Heart left ventricle (tissue), 16 donors: ENCODE measurements at regions of chr12 and their contacts with region 1.

Region 1: GRCh38 chr12:15789220-15790171 is at the start of gene EPS8:
- DNase-seq: peak; percentile 90 to 96 (median 93)
- ATAC-seq: peak; percentile 83 to 98 (median 94)
- H3K4me3 ChIP-seq: peak within 1 kb of the TSS; percentile 66 to 92 (median 84)
- H3K27ac ChIP-seq: peak within 1 kb of the TSS; percentile 80 to 94 (median 89)
- H3K4me1 ChIP-seq: peaks cover 0 to 13% (median 0%) of the 10 kb centered on the region in 12 donors
- H3K27me3 ChIP-seq: no peaks in the 10 kb centered on the region
- CTCF ChIP-seq: peak in 3 of 12 donors; percentile 4 to 33 (median 26)
- POLR2A ChIP-seq: peak in 1 of 2 donors; percentile 90
- total RNA-seq, gene EPS8: 11.7 to 56.0 (median 20.9) TPM

Region 2: DNA sequence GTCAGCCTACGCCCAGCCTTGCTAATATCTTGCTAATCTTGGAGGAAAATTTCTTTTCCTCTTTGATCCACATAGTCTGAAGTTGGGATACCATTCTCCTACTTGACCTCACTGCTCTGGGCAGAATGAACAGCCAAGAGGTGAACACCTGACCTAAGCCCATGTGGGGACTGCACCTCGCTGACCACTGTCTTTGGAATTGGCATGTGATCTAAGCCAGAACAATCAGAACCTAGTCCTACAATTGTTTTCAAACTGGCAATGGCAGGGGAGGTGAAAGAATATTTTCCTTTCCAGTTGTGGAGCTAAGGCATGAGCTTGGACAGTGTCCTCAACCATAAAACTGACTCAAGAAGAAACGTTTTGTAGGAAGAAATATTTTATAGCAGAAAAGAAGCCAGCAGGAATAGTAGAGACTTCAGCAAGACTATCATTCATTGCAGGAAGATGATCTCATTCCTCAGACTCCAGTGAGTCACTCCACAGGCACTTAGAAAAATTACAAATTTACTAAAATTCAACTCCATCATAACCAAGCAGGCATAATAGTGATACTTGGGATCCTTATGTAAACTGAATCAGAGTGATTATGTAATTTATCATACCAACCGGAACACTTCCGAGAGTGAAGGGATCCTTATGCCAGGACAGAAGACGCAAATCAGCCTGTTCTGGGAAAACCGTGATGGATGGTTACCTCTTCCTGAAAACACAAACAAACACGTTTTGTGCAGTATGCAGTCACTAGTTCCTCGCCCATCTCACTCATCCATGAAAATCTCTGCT is 452.5 kb before region 1 on chr12:
- intact Hi-C with region 1: no loop called
- DNase-seq: no peak
- ATAC-seq: no peak
- H3K4me3 ChIP-seq: no peak overlapping the region
- H3K27ac ChIP-seq: no peak overlapping the region
- H3K4me1 ChIP-seq: no peaks in the 10 kb centered on the region
- H3K27me3 ChIP-seq: peaks cover 0 to 12% (median 0%) of the 10 kb centered on the region in 9 donors
- CTCF ChIP-seq: no peak
- POLR2A ChIP-seq: no peak

Region 3: GRCh38 chr12:15590180-15590826 is 199.2 kb before region 1 on chr12:
- intact Hi-C with region 1: loop called in 7 of 10 experiments (anchors 2 to 10 kb)
- DNase-seq: peak; percentile 28 to 54 (median 36)
- ATAC-seq: peak; percentile 61 to 90 (median 89)
- H3K4me3 ChIP-seq: peak overlapping the region in 9 of 12 donors; percentile 22 to 47 (median 36)
- H3K27ac ChIP-seq: peak overlapping the region in 6 of 12 donors; percentile 5 to 60 (median 38)
- H3K4me1 ChIP-seq: peaks cover 0 to 8% (median 0%) of the 10 kb centered on the region in 12 donors
- H3K27me3 ChIP-seq: no peaks in the 10 kb centered on the region
- CTCF ChIP-seq: peak; percentile 83 to 98 (median 90)
- POLR2A ChIP-seq: no peak

Region 4: DNA sequence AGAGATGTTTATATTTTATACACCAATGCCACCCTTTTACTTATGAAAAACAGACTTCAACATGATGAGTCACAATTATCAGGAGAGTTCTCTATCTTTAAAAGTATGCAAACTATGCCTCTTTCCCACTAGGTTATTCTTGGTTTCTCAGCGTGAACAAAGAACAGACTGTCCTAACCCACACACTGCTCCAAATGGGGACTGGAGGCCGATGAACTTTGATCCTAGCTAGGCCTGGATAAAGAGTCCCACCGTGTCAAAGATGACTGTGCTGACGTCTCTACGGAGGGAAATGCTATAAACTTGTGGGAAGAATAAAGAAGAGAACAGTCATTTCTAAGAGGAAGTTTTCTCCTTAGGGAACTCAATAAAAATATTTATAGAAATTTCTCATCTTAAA is 160.4 kb before region 1 on chr12:
- intact Hi-C with region 1: loop called in 2 of 10 experiments (anchors 5 to 10 kb)
- DNase-seq: peak in 4 of 5 donors; percentile 72 to 81 (median 76)
- ATAC-seq: peak; percentile 91 to 98 (median 98)
- H3K4me3 ChIP-seq: no peak overlapping the region
- H3K27ac ChIP-seq: peak overlapping the region; percentile 75 to 90 (median 82)
- H3K4me1 ChIP-seq: peaks cover 0 to 57% (median 28%) of the 10 kb centered on the region in 12 donors
- H3K27me3 ChIP-seq: no peaks in the 10 kb centered on the region
- CTCF ChIP-seq: no peak
- POLR2A ChIP-seq: no peak

Region 5: GRCh38 chr12:15688202-15688736 is 101.2 kb before region 1 on chr12:
- intact Hi-C with region 1: loop called in 1 of 10 experiments (anchors 10 kb)
- DNase-seq: peak; percentile 52 to 77 (median 71)
- ATAC-seq: peak in 3 of 4 donors; percentile 82 to 88 (median 87)
- H3K4me3 ChIP-seq: peak overlapping the region in 9 of 12 donors; percentile 3 to 46 (median 23)
- H3K27ac ChIP-seq: peak overlapping the region in 11 of 12 donors; percentile 41 to 83 (median 62)
- H3K4me1 ChIP-seq: peaks cover 0 to 64% (median 23%) of the 10 kb centered on the region in 12 donors
- H3K27me3 ChIP-seq: no peaks in the 10 kb centered on the region
- CTCF ChIP-seq: no peak
- POLR2A ChIP-seq: peak in 1 of 2 donors; percentile 45

Region 6: GRCh38 chr12:15808652-15809051 is 19.2 kb after region 1 on chr12:
- intact Hi-C with region 1: loop called in 1 of 10 experiments (anchors 2 kb)
- DNase-seq: no peak
- ATAC-seq: no peak
- H3K4me3 ChIP-seq: no peak overlapping the region
- H3K27ac ChIP-seq: peak overlapping the region in 1 of 12 donors; percentile 39
- H3K4me1 ChIP-seq: peaks cover 0 to 13% (median 0%) of the 10 kb centered on the region in 12 donors
- H3K27me3 ChIP-seq: no peaks in the 10 kb centered on the region
- CTCF ChIP-seq: no peak
- POLR2A ChIP-seq: no peak

Region 7: GRCh38 chr12:15856097-15856982 is 66.8 kb after region 1 on chr12:
- intact Hi-C with region 1: loop called in 3 of 10 experiments (anchors 5 to 10 kb)
- DNase-seq: peak in 2 of 5 donors; percentile 37 to 44
- ATAC-seq: peak in 3 of 4 donors; percentile 46 to 76 (median 67)
- H3K4me3 ChIP-seq: no peak overlapping the region
- H3K27ac ChIP-seq: peak overlapping the region in 5 of 12 donors; percentile 1 to 45 (median 8)
- H3K4me1 ChIP-seq: peaks cover 0 to 7% (median under 1%) of the 10 kb centered on the region in 12 donors
- H3K27me3 ChIP-seq: peaks cover 0 to 6% (median 0%) of the 10 kb centered on the region in 9 donors
- CTCF ChIP-seq: peak; percentile 64 to 94 (median 84)
- POLR2A ChIP-seq: no peak